ENCODE measurements at regions of chr2 and their contacts with region 1.

Region 1: GRCh38 chr2:148948868-148949267 is 73.8 kb downstream of the KIF5C start:
- DNase-seq: no peak
- H3K4me3 ChIP-seq: no peak overlapping the region
- H3K27ac ChIP-seq: no peak overlapping the region
- H3K4me1 ChIP-seq: no peaks in the 10 kb centered on the region
- H3K27me3 ChIP-seq: no peaks in the 10 kb centered on the region
- CTCF ChIP-seq: no peak
- POLR2A ChIP-seq: no peak

Region 2: GRCh38 chr2:147703171-147703570 is 1245.7 kb before region 1 on chr2:
- intact Hi-C with region 1: no loop called
- DNase-seq: no peak
- H3K4me3 ChIP-seq: no peak overlapping the region
- H3K27ac ChIP-seq: no peak overlapping the region
- H3K4me1 ChIP-seq: no peaks in the 10 kb centered on the region
- H3K27me3 ChIP-seq: no peaks in the 10 kb centered on the region
- CTCF ChIP-seq: no peak
- POLR2A ChIP-seq: no peak

Region 3: GRCh38 chr2:148416248-148416647 is 532.6 kb before region 1 on chr2:
- intact Hi-C with region 1: no loop called
- DNase-seq: no peak
- H3K4me3 ChIP-seq: no peak overlapping the region
- H3K27ac ChIP-seq: no peak overlapping the region
- H3K4me1 ChIP-seq: no peaks in the 10 kb centered on the region
- H3K27me3 ChIP-seq: no peaks in the 10 kb centered on the region
- CTCF ChIP-seq: no peak
- POLR2A ChIP-seq: no peak

Region 4: DNA sequence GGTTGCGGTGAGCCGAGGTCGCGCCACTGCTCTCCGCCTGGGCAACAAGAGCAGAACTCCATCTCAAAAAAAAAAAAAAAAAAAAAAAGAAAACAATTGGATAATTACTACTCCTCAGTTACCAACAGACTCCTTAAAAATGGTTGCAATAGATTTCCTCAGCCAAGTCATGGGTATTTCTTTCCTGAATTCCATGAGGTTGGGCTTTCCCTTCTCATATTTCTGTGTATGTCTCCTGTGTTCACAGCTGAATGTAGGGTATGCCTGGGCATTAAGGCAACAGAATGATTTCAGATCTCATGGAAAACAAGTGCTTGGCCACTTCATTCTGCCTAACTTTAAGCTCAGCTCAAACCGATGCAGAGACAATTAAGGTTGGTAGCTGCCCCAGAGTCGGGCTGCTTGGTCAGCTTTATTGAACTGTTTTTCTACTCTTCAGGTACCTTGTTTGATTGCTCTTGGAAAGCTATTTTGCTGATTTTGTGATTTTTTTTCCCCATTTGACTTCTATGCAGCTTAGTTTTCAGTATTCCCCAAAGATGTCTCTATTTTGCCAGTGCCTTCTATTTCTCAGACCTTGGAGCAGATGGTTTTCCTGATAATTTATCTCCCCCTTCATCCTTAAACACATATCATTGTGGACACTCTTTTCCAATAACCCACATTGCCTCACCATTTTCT is 49.1 kb before region 1 on chr2:
- intact Hi-C with region 1: loop called (anchors 2 kb)
- DNase-seq: no peak
- H3K4me3 ChIP-seq: no peak overlapping the region
- H3K27ac ChIP-seq: no peak overlapping the region
- H3K4me1 ChIP-seq: no peaks in the 10 kb centered on the region
- H3K27me3 ChIP-seq: no peaks in the 10 kb centered on the region
- CTCF ChIP-seq: no peak
- POLR2A ChIP-seq: no peak

Region 5: GRCh38 chr2:149355716-149356422 is 407.0 kb after region 1 on chr2:
- intact Hi-C with region 1: loop called (anchors 5 kb)
- DNase-seq: no peak
- H3K4me3 ChIP-seq: no peak overlapping the region
- H3K27ac ChIP-seq: no peak overlapping the region
- H3K4me1 ChIP-seq: no peaks in the 10 kb centered on the region
- H3K27me3 ChIP-seq: no peaks in the 10 kb centered on the region
- CTCF ChIP-seq: no peak
- POLR2A ChIP-seq: no peak

Measured in breast epithelium (tissue), 4 donors.